Heart right ventricle (tissue), 16 donors: ENCODE measurements at regions of chr20 and their contacts with region 1.

Region 1: DNA sequence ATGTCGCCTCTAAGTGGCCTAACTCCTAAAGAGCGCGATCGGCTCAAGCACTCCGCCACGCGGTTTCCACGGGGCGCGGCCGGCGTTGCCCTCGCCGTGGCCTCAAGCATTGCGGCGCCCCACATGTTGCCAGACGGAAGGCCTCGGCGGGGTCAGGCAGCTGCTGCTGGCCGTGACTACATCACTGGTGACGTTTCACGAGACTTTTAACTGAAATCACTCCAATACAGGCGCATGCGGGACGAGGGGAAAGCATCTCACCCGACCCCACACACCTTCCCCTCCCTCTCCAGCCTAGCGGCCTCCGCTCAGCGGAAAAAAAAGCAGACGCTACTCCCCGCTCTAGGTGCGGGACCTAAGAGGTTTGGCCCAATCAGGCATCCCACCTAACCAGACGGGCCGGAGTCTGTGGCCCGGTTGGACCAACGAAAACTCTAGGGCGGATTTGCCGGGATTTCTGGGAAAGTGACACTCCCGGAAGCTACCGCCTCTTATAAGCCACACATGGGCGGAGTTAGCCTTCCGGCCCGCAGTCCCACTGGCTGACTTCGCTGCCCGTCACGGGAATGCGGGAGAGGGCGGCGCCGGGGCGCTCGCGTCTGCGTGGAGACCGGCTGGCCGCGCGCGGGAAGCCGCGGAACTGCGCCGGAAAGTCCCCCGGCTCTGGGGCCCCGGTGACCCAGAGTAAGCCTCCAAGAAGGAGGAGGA is at the start of gene NXT1:
- DNase-seq: peak; percentile 97 to 98
- ATAC-seq: peak; percentile 93 to 97 (median 96)
- H3K4me3 ChIP-seq: peak within 1 kb of the TSS; percentile 78 to 97 (median 86)
- H3K27ac ChIP-seq: peak within 1 kb of the TSS; percentile 88 to 100 (median 98)
- H3K4me1 ChIP-seq: peaks cover 3 to 29% (median 24%) of the 10 kb centered on the region in 9 donors
- H3K27me3 ChIP-seq: no peaks in the 10 kb centered on the region
- CTCF ChIP-seq: no peak
- total RNA-seq, gene NXT1: 4.5 to 12.9 (median 6.5) TPM

Region 2: DNA sequence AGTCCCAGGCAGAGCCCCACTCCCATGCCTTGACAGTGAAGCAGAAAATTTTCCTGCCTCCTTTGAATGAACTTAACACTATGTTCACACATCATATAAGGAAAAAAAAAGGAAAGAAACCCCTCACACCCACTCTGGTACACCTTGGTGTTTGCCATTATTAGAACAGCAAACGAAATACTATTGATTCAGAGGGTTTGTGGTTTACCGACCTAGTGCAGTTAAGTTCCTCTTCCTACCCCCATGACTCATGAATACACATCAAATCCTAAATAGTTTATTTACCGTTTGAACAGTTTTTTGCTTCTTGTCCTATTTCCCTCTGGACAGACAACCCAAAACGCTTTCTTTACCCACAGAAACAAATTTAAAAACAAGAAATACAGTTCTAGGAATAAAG is 1003.6 kb before region 1 on chr20:
- intact Hi-C with region 1: loop called in 1 of 10 experiments (anchors 10 kb)
- DNase-seq: no peak
- ATAC-seq: no peak
- H3K4me3 ChIP-seq: no peak overlapping the region
- H3K27ac ChIP-seq: no peak overlapping the region
- H3K4me1 ChIP-seq: no peaks in the 10 kb centered on the region
- H3K27me3 ChIP-seq: peaks cover 0 to 60% (median 41%) of the 10 kb centered on the region in 7 donors
- CTCF ChIP-seq: no peak

Region 3: GRCh38 chr20:23161968-23162696 is 188.2 kb before region 1 on chr20:
- intact Hi-C with region 1: loop called in 2 of 10 experiments (anchors 10 kb)
- DNase-seq: peak; percentile 72 to 80
- ATAC-seq: peak; percentile 46 to 92 (median 85)
- H3K4me3 ChIP-seq: no peak overlapping the region
- H3K27ac ChIP-seq: peak overlapping the region; percentile 24 to 87 (median 68)
- H3K4me1 ChIP-seq: peaks cover 8 to 70% (median 60%) of the 10 kb centered on the region in 9 donors
- H3K27me3 ChIP-seq: no peaks in the 10 kb centered on the region
- CTCF ChIP-seq: no peak

Region 4: DNA sequence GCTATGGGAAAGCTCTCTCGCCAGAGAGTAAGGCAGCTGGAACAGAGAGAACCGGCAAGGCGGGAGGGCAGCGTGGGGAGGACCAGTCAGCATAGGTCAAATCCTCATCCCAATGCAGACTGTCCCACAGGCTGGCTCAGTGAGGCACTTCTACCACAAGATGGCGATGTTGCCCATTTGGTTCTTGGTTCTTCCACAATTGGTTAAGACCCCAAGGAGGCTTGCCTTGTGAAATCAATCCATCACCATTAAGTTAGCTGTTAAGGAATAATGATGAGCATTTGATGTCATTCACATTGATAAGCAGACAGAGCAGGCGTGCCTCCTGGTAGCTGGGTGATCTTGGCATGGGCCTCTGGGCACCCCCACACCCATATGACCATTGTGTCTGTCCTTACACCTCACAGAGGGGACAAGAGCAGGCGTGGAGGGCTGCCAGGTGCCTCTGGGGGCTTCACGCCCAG is 91.5 kb after region 1 on chr20:
- intact Hi-C with region 1: loop called in 1 of 10 experiments (anchors 1 kb)
- DNase-seq: peak; percentile 31 to 72
- ATAC-seq: peak; percentile 59 to 82 (median 75)
- H3K4me3 ChIP-seq: no peak overlapping the region
- H3K27ac ChIP-seq: no peak overlapping the region
- H3K4me1 ChIP-seq: peaks cover 0 to 3% (median 0%) of the 10 kb centered on the region in 9 donors
- H3K27me3 ChIP-seq: no peaks in the 10 kb centered on the region
- CTCF ChIP-seq: peak; percentile 70 to 92 (median 86)

Region 5: GRCh38 chr20:23637282-23638221 is 287.2 kb after region 1 on chr20 and contains the start of gene CST3:
- intact Hi-C with region 1: loop called in 2 of 10 experiments (anchors 10 kb)
- DNase-seq: peak; percentile 94
- ATAC-seq: peak; percentile 77 to 94 (median 90)
- H3K4me3 ChIP-seq: peak within 1 kb of the TSS; percentile 73 to 100 (median 93)
- H3K27ac ChIP-seq: peak within 1 kb of the TSS; percentile 92 to 100 (median 98)
- H3K4me1 ChIP-seq: peaks cover 5 to 61% (median 40%) of the 10 kb centered on the region in 9 donors
- H3K27me3 ChIP-seq: no peaks in the 10 kb centered on the region
- CTCF ChIP-seq: peak in 2 of 9 donors; percentile 6 to 8
- total RNA-seq, gene CST3: 395 to 1,066 (median 576) TPM